Activated T-helper 2 cell treated with anti-CD3 and anti-CD28 coated beads, Interferon-gamma antibody, Interleukin-2, Interleukin-4, amounts not matched to agents 10 μg/mL and 5 μg/mL and 100 μg/mL, durations not matched to agents 14 hours and 24 hours and 36 hours (primary cell): ENCODE measurements at regions of chr5 and their contacts with region 1.

Region 1: DNA sequence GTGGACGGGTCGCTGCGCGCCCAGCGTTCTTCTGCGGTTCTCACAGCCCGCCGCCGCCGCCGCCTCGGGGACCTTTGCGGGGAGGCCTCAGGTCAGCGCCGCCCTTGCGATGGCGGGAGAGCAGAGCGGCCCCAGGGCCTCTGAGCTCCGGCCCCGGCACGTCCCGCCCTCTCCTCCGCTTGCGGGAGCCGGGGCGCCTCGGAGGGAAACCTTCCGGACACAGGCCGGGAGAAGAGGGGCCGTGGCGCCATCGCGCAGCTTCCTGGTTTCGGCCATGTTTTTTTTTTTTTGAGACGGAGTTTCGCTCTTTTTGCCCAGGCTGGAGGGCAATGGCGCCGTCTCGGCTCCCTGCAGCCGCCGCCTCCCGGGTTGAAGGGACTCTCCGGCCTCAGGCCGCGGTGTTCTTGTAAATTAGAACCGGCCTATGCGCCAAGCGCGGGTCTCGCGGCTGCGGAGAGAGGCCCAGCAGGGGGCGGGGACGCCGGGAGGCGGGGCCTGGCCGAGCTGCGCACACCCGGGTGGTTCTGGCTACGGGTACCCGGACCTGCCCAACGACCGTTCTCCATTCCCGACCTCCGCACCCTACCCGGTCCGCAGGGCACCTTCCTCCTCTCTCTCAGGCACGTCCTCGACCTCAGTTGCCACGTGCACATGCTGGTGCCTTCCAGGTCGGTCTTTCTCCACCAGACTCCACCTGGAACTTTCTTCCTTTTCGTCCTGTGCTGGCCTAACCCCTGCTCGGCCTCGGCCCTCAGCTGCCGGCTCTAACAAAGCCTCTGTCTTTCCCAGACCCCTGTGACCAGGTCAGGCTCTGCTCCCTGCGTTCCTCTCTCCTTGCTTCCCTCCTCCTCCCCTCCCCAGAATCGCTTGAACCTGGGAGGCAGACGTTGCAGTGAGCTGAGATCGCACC is 28.8 kb upstream of the MGAT1 start:
- DNase-seq: peak; percentile 74
- H3K4me3 Mint-ChIP-seq: peak overlapping the region; percentile 88
- H3K27ac Mint-ChIP-seq: peak overlapping the region; percentile 92
- H3K4me1 Mint-ChIP-seq: peaks cover 29% of the 10 kb centered on the region
- H3K27me3 Mint-ChIP-seq: no peaks in the 10 kb centered on the region

Region 2: GRCh38 chr5:180802325-180803180 is 28.8 kb before region 1 on chr5 and contains the start of gene MGAT1:
- intact Hi-C with region 1: loop called (anchors 1 kb)
- DNase-seq: peak; percentile 66
- H3K4me3 Mint-ChIP-seq: peak within 1 kb of the TSS; percentile 92
- H3K27ac Mint-ChIP-seq: peak within 1 kb of the TSS; percentile 91
- H3K4me1 Mint-ChIP-seq: peaks cover 74% of the 10 kb centered on the region
- H3K27me3 Mint-ChIP-seq: no peaks in the 10 kb centered on the region
- total RNA-seq, gene MGAT1: 122 TPM in 2 replicates

Region 3: GRCh38 chr5:180810210-180810958 is 21.0 kb before region 1 on chr5:
- intact Hi-C with region 1: loop called (anchors 1 kb)
- DNase-seq: peak; percentile 92
- H3K4me3 Mint-ChIP-seq: peak overlapping the region; percentile 79
- H3K27ac Mint-ChIP-seq: peak overlapping the region; percentile 99
- H3K4me1 Mint-ChIP-seq: peaks cover 69% of the 10 kb centered on the region
- H3K27me3 Mint-ChIP-seq: no peaks in the 10 kb centered on the region